ENCODE measurements at regions of chr1 and their contacts with region 1.

Region 1: GRCh38 chr1:191546803-191547202 is 611.5 kb upstream of the RGS18 start:
- DNase-seq: no peak
- H3K4me3 Mint-ChIP-seq: no peak overlapping the region
- H3K27ac Mint-ChIP-seq: no peak overlapping the region
- H3K4me1 Mint-ChIP-seq: no peaks in the 10 kb centered on the region
- H3K27me3 Mint-ChIP-seq: no peaks in the 10 kb centered on the region

Region 2: GRCh38 chr1:191572479-191572878 is 25.7 kb after region 1 on chr1:
- intact Hi-C with region 1: loop called (anchors 1 kb)
- DNase-seq: no peak
- H3K4me3 Mint-ChIP-seq: no peak overlapping the region
- H3K27ac Mint-ChIP-seq: no peak overlapping the region
- H3K4me1 Mint-ChIP-seq: no peaks in the 10 kb centered on the region
- H3K27me3 Mint-ChIP-seq: no peaks in the 10 kb centered on the region